Thyroid gland (tissue), 4 donors: ENCODE measurements at regions of chr15 and their contacts with region 1.

Region 1: GRCh38 chr15:74620636-74621545 is 5.3 kb downstream of the CLK3 start:
- DNase-seq: peak; percentile 44 to 50
- H3K4me3 ChIP-seq: no peak overlapping the region
- H3K27ac ChIP-seq: no peak overlapping the region
- H3K4me1 ChIP-seq: peaks cover 17 to 19% of the 10 kb centered on the region in 2 donors
- H3K27me3 ChIP-seq: no peaks in the 10 kb centered on the region
- CTCF ChIP-seq: peak in 5 of 6 experiments; percentile 15 to 69 (median 55)
- POLR2A ChIP-seq: no peak

Region 2: DNA sequence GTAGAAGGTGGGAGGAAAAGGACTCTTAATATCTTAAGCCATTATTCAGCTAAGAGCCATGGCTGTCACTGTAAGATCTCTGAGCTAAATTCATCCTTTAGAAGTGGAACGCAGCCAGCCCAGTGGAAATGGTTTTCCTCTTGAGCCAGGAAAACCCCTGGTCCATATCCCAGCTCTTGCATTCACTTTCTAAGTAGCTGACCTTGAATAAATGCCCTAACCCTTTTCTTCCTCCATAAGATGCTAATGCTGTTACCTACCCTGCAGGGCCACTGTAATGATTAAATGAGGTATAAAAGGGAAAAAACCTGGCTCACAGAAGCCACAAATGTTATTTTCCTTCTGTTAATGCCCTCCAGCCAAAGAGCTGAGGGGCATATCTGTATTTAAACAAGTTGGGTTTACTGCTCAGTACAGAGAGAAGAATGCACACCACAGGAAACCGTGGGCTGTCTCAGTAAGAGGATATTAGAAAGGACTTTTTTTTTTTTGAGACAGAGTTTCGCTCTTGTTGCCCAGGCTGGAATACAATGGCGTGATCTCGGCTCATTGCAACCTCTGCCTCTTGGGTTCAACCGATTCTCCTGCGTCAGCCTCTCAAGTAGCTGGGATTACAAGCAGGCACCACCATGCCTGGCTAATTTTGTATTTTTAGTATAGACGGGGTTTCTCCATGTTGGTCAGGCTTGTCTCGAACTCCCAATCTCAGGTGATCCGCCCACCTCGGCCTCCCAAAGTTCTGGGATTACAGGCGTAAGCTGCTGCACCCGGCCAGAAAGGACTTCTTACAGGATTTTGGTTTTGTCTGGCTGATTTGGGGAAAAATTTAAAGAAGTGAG is 166.7 kb before region 1 on chr15:
- intact Hi-C with region 1: loop called (anchors 10 kb)
- DNase-seq: no peak
- H3K4me3 ChIP-seq: no peak overlapping the region
- H3K27ac ChIP-seq: no peak overlapping the region
- H3K4me1 ChIP-seq: no peaks in the 10 kb centered on the region
- H3K27me3 ChIP-seq: no peaks in the 10 kb centered on the region
- CTCF ChIP-seq: no peak
- POLR2A ChIP-seq: no peak